Activated CD4-positive, alpha-beta memory T cell treated with anti-CD3 and anti-CD28 coated beads for 36 hours (primary cell): ENCODE measurements at regions of chr13 and their contacts with region 1.

Region 1: DNA sequence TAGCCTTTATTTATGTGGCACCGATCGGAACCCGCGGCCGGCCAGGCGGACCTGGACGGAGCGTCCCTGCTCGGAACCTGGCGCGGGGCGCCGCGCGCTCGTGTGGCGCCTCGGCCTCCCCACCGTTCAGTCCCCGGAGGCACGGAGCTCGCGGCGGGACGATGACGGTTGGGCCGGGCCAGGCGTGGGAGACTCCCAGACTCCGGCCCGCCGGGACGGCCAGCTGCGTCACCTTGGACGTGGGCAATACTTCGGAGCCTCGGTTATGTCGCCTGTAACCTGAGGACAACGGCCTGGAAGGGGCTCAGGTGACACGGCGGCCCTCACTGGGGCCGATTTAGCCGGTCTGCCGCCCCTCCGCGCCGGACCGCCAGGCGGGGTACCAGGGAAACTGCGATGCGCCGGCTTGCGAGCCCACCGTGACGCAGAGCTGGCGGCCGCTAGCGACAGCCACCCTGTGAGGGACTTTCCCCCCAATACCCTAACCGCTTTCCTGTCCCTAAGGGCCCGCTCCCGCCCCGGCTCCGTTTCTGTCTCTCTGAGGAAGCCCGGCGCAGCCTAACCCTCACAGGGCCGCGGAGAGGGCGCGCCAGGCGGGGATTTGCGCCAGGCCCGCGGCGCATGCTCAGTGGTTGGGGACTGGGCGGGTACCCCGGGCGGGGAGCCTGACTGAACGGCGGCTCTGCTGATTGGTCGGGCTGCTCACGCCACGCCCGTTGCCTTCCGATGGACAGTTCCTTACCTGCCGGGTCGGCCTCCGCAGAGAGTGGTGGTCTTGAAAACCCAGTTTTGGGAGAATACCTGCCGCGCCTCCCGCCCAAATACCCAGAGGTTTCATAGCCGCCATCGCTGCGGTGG is 109.5 kb upstream of the DOCK9 start:
- DNase-seq: peak; percentile 95
- H3K4me3 Mint-ChIP-seq: peak overlapping the region; percentile 99
- H3K27ac Mint-ChIP-seq: peak overlapping the region; percentile 97
- H3K4me1 Mint-ChIP-seq: peaks cover 32% of the 10 kb centered on the region
- H3K27me3 Mint-ChIP-seq: no peaks in the 10 kb centered on the region

Region 2: DNA sequence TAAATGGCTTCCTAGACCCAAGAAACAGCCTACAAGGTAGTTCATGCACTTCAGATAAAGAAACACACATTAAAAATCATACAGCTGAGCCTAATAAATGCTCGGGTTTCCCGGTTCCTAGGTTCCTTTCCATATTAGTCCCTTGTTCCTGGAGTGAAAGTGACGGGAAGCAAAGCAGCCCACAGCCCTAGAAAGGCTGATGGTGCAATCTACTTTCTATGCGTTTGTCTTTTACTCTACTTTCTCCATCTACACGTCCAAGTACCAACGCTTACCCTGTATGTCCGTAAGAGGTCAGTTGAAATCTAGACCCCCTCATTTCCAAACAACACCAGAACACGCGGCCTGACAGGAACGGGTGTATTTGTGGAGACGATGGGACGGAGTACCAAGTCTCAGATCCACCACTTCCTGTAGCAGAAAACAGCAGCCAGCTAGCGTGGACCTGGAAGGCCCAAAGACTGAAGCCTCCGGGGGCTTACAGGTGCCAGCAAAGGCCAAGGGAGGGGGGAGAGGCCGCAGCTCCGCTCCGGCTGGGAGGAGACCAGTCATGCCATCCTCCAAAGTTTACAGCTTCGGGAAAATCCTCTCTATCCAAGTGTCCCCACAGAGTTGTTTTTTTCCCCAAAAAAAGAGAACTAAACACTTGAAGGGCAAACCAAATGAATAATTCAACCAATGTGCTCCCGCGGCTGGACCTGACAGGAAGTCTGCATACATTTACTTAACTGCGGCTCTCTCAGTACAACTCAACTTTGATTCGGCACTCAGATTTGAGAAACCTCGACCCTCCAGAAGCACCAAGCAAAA is 544.6 kb before region 1 on chr13:
- CTCF ChIA-PET with region 1: no interaction called
- POLR2A ChIA-PET with region 1: no interaction called
- intact Hi-C with region 1: no loop called
- DNase-seq: peak; percentile 54
- H3K4me3 Mint-ChIP-seq: peak overlapping the region; percentile 68
- H3K27ac Mint-ChIP-seq: peak overlapping the region; percentile 83
- H3K4me1 Mint-ChIP-seq: peaks cover 94% of the 10 kb centered on the region
- H3K27me3 Mint-ChIP-seq: no peaks in the 10 kb centered on the region

Region 3: DNA sequence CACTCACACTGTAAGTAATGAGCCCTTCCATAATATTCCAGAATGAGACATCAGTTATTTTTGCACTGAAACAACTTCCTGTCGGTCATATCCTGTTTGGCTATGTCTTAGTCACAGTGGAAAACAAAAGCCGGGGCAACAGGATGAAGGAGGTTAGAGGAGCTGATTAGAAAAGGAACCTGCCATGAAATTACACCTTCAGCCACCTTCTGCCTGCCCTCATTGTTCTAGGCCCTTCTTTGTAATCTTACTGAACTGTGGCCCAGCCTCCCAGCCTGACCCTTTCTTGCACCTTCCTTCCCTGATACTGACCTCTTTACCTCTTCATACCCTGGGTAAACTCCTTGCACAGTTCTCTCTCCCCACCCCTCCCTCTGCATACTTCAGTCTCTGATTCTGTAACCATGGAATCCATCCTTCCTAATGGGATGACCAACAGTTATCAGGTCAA is 176.8 kb before region 1 on chr13:
- CTCF ChIA-PET with region 1: no interaction called
- POLR2A ChIA-PET with region 1: no interaction called
- intact Hi-C with region 1: loop called (anchors 2 kb)
- DNase-seq: peak; percentile 64
- H3K4me3 Mint-ChIP-seq: no peak overlapping the region
- H3K27ac Mint-ChIP-seq: peak overlapping the region; percentile 94
- H3K4me1 Mint-ChIP-seq: peaks cover 60% of the 10 kb centered on the region
- H3K27me3 Mint-ChIP-seq: no peaks in the 10 kb centered on the region

Region 4: GRCh38 chr13:99046851-99047250 is 40.5 kb before region 1 on chr13:
- CTCF ChIA-PET with region 1: interaction called, 3 read pairs
- POLR2A ChIA-PET with region 1: interaction called, 6 read pairs
- intact Hi-C with region 1: loop called (anchors 1 kb)
- DNase-seq: no peak
- H3K4me3 Mint-ChIP-seq: peak overlapping the region; percentile 63
- H3K27ac Mint-ChIP-seq: peak overlapping the region; percentile 92
- H3K4me1 Mint-ChIP-seq: peaks cover 94% of the 10 kb centered on the region
- H3K27me3 Mint-ChIP-seq: no peaks in the 10 kb centered on the region

Region 5: GRCh38 chr13:99075268-99076191 is 11.8 kb before region 1 on chr13:
- CTCF ChIA-PET with region 1: interaction called, 5 read pairs
- POLR2A ChIA-PET with region 1: interaction called, 5 read pairs
- intact Hi-C with region 1: loop called (anchors 1 kb)
- DNase-seq: no peak
- H3K4me3 Mint-ChIP-seq: peak overlapping the region; percentile 47
- H3K27ac Mint-ChIP-seq: peak overlapping the region; percentile 87
- H3K4me1 Mint-ChIP-seq: peaks cover 70% of the 10 kb centered on the region
- H3K27me3 Mint-ChIP-seq: no peaks in the 10 kb centered on the region

Region 6: DNA sequence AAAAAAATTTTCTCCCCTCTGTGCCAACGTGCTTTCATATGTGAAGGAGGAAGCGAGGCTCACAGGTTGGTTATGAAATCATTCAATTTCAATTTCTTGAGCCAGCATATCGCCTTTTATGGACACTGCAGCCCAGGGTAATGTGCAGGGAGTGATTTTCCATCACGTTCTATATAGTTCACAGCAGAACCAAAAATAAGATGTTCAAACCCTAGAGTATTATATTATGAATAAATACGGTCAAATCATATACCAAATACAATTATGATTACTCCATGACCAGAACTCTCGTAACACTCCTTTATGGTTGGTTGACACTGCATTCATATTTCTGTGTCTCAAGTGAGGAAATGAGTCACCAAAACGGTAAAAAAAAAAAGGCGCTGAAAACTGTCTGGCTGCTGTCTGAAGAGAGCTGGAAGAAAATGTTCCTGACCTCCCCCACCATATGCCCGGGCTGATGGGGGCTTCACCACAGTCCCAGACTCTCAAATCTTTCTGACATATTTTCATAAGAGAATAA is 37.5 kb after region 1 on chr13:
- CTCF ChIA-PET with region 1: interaction called, 3 read pairs
- POLR2A ChIA-PET with region 1: interaction called, 3 read pairs
- intact Hi-C with region 1: loop called (anchors 2 kb)
- DNase-seq: peak; percentile 38
- H3K4me3 Mint-ChIP-seq: peak overlapping the region; percentile 58
- H3K27ac Mint-ChIP-seq: peak overlapping the region; percentile 71
- H3K4me1 Mint-ChIP-seq: peaks cover 45% of the 10 kb centered on the region
- H3K27me3 Mint-ChIP-seq: peaks cover 2% of the 10 kb centered on the region